Activated CD8-positive, alpha-beta T cell treated with anti-CD3 and anti-CD28 coated beads, Interleukin-2, amount 10 ng/mL, durations not matched to agents 7 days and 5 days (primary cell): ENCODE measurements at regions of chr2 and their contacts with region 1.

Region 1: GRCh38 chr2:64330281-64331113 is 123.5 kb upstream of the LGALSL start:
- DNase-seq: peak; percentile 85
- ATAC-seq: no peak
- H3K4me3 Mint-ChIP-seq: peak overlapping the region; percentile 15
- H3K27ac Mint-ChIP-seq: peak overlapping the region; percentile 55
- H3K4me1 Mint-ChIP-seq: peaks cover 58% of the 10 kb centered on the region
- H3K27me3 Mint-ChIP-seq: peaks cover 8% of the 10 kb centered on the region

Region 2: DNA sequence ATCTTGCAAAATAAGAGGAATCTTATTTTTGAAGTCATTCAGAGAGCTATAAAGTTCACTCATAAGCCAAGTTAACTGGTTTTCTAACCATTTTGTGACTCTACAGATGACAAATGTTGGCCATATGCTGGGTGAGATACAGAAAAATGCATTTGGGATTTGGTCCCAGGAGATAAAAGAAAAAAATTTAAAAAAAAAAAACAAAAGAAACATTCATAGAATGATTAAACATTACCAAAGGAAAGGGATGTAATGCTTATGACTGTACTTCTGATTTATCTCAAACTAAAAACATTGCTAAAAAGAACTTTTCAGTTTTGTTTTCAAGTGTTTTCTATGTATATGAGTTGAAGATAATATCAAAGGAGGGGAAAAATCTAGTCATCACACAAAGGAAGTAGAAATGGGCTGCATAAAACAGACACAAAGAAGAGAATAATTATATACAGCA is 229.3 kb before region 1 on chr2:
- CTCF ChIA-PET with region 1: interaction called, 13 read pairs
- POLR2A ChIA-PET with region 1: no interaction called
- DNase-seq: no peak
- ATAC-seq: peak; percentile 62
- H3K4me3 Mint-ChIP-seq: no peak overlapping the region
- H3K27ac Mint-ChIP-seq: peak overlapping the region; percentile 62
- H3K4me1 Mint-ChIP-seq: peaks cover 9% of the 10 kb centered on the region
- H3K27me3 Mint-ChIP-seq: no peaks in the 10 kb centered on the region

Region 3: GRCh38 chr2:64214281-64215115 is 116.0 kb before region 1 on chr2:
- CTCF ChIA-PET with region 1: interaction called, 15 read pairs
- POLR2A ChIA-PET with region 1: interaction called, 4 read pairs
- DNase-seq: no peak
- ATAC-seq: peak; percentile 51
- H3K4me3 Mint-ChIP-seq: peak overlapping the region; percentile 47
- H3K27ac Mint-ChIP-seq: peak overlapping the region; percentile 79
- H3K4me1 Mint-ChIP-seq: peaks cover 45% of the 10 kb centered on the region
- H3K27me3 Mint-ChIP-seq: no peaks in the 10 kb centered on the region

Region 4: GRCh38 chr2:64250751-64251403 is 79.6 kb before region 1 on chr2:
- CTCF ChIA-PET with region 1: no interaction called
- POLR2A ChIA-PET with region 1: no interaction called
- DNase-seq: no peak
- ATAC-seq: no peak
- H3K4me3 Mint-ChIP-seq: no peak overlapping the region
- H3K27ac Mint-ChIP-seq: no peak overlapping the region
- H3K4me1 Mint-ChIP-seq: no peaks in the 10 kb centered on the region
- H3K27me3 Mint-ChIP-seq: no peaks in the 10 kb centered on the region

Region 5: GRCh38 chr2:64348386-64349130 is 18.1 kb after region 1 on chr2:
- CTCF ChIA-PET with region 1: interaction called, 18 read pairs
- POLR2A ChIA-PET with region 1: no interaction called
- DNase-seq: no peak
- ATAC-seq: no peak
- H3K4me3 Mint-ChIP-seq: no peak overlapping the region
- H3K27ac Mint-ChIP-seq: no peak overlapping the region
- H3K4me1 Mint-ChIP-seq: no peaks in the 10 kb centered on the region
- H3K27me3 Mint-ChIP-seq: peaks cover 4% of the 10 kb centered on the region

Region 6: GRCh38 chr2:64488050-64488974 is 157.8 kb after region 1 on chr2:
- CTCF ChIA-PET with region 1: interaction called, 230 read pairs
- POLR2A ChIA-PET with region 1: no interaction called
- DNase-seq: peak; percentile 86
- ATAC-seq: peak; percentile 78
- H3K4me3 Mint-ChIP-seq: no peak overlapping the region
- H3K27ac Mint-ChIP-seq: no peak overlapping the region
- H3K4me1 Mint-ChIP-seq: peaks cover 23% of the 10 kb centered on the region
- H3K27me3 Mint-ChIP-seq: peaks cover 26% of the 10 kb centered on the region

Region 7: DNA sequence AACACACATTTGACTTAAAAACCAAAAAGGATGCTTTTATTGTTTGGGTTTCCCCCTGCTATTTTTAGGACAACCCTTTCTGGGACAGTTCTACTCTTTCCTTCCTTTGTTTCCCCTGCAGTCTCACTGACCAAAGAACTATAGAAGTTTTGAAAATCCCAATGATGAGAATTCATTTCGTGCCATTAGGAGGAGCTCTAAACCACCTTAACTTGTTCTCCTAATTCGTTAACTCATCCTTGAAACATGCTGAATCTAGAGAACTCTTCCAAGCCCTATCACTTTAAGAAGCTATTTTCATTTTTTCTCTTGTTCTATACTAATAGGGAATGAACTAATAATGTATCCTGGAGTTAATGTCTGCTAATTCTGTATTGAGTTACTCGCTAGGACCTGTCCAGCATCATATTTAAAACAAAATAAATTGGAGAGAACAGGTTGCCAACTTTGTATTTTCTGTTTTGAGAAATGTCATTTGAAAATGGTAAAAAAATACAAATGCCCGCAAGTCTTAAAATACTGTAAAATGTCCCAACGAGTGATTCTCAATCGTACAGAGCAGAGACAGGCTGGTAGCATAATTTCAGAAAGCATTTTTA is 256.5 kb after region 1 on chr2:
- CTCF ChIA-PET with region 1: interaction called, 20 read pairs
- POLR2A ChIA-PET with region 1: no interaction called
- DNase-seq: no peak
- ATAC-seq: no peak
- H3K4me3 Mint-ChIP-seq: no peak overlapping the region
- H3K27ac Mint-ChIP-seq: no peak overlapping the region
- H3K4me1 Mint-ChIP-seq: peaks cover 6% of the 10 kb centered on the region
- H3K27me3 Mint-ChIP-seq: no peaks in the 10 kb centered on the region

Region 8: GRCh38 chr2:64873472-64873924 is 543.0 kb after region 1 on chr2:
- CTCF ChIA-PET with region 1: interaction called, 13 read pairs
- POLR2A ChIA-PET with region 1: no interaction called
- DNase-seq: peak; percentile 85
- ATAC-seq: peak; percentile 97
- H3K4me3 Mint-ChIP-seq: no peak overlapping the region
- H3K27ac Mint-ChIP-seq: peak overlapping the region; percentile 12
- H3K4me1 Mint-ChIP-seq: peaks cover 6% of the 10 kb centered on the region
- H3K27me3 Mint-ChIP-seq: peaks cover 16% of the 10 kb centered on the region

Region 9: GRCh38 chr2:64952511-64953482 is 622.3 kb after region 1 on chr2:
- CTCF ChIA-PET with region 1: no interaction called
- POLR2A ChIA-PET with region 1: no interaction called
- DNase-seq: no peak
- ATAC-seq: no peak
- H3K4me3 Mint-ChIP-seq: no peak overlapping the region
- H3K27ac Mint-ChIP-seq: no peak overlapping the region
- H3K4me1 Mint-ChIP-seq: peaks cover 12% of the 10 kb centered on the region
- H3K27me3 Mint-ChIP-seq: no peaks in the 10 kb centered on the region